Dendritic cell treated with granulocyte-macrophage colony-stimulating factor and Interleukin-4, amounts not matched to agents 40 ng/mL and 50 ng/mL, for 4 days (primary cell): ENCODE measurements at regions of chr12 and their contacts with region 1.

Region 1: DNA sequence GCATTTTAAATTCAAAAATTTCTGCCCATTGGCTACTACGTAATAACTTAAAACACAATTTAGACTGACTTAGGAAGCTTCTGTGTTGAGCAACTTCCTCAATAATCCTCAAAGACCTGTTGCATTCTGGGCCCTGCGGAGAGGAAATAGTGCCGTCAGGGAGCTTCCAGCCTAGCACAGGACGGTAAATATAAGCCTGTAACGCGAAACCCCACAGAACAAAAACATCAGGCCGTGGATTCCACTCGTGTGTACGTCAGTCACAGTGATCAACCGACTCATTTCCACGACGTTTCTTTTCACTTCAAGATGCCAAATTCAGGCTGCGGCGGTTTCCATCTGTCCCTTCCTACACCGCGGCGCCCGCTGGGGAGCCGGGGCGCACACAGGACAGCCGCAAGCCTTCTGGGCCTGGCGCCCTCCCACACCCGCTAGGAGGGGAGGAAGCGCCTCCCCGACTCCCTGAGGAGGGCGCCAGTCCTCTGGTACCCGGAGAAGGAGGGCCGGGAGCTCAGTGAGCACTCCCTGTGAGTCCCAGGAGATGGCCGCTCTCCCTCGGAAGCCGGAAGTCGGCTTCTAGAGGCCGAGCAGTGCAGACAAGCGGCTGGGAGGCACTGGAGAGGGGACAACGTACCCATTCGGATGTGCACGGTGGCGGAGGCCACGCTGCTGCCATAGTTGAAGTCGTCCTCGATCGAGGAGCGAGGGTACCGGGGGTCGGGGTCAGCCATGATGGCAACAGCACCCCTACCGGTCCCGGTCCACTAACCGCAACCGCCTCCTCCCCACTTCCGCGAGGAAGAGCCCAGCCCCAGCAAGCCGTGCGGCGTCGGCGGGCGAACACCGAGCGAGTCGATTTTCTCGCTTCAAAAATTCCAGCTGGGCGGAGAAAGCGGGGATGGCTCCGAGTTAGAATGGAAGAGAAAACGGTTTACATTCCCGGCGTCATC is at the start of gene TMBIM4:
- H3K4me3 Mint-ChIP-seq: peak within 1 kb of the TSS; percentile 97
- H3K27ac Mint-ChIP-seq: peak within 1 kb of the TSS; percentile 100
- H3K4me1 Mint-ChIP-seq: peaks cover 56% of the 10 kb centered on the region
- H3K27me3 Mint-ChIP-seq: no peaks in the 10 kb centered on the region

Region 2: DNA sequence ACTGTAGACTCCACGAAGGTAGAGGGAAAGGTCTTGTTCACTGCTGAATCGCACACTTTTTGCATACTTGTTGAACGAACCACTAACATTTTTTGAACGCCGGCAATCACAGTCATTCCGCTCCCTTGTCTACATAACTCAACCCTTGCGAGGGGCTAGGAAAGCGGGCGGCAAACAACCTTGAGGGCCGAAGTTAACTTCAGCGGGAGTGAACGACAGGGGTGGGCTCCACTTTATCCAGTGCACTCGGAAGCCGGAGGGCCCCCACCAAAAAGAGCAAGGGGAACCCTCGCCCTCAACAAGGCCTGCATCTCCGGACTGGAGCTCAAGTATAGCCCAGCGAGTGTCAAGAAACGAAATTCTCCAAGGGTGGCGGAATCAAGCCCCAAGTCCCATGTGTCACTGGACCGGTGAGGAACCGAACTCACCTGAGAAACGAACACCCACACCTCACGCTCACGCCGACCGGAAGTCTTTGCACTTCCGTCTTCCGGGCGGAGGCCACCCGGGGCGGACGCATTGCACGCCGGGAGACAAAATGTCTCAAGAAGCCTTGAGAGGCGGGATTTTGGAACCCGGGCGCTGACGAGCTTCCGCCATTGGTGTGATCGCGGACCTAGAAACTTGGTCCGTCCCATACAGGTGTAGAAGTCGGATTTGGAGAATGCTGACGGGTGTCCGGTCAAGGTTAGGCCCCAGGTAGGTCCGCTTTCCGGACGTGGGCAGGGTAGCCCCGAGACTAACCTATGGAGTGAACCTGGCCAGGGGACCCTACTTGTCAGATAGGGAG is 39.0 kb before region 1 on chr12 and contains the start of gene LLPH:
- intact Hi-C with region 1: loop called (anchors 5 kb)
- H3K4me3 Mint-ChIP-seq: peak within 1 kb of the TSS; percentile 77
- H3K27ac Mint-ChIP-seq: peak within 1 kb of the TSS; percentile 89
- H3K4me1 Mint-ChIP-seq: peaks cover 29% of the 10 kb centered on the region
- H3K27me3 Mint-ChIP-seq: no peaks in the 10 kb centered on the region

Region 3: DNA sequence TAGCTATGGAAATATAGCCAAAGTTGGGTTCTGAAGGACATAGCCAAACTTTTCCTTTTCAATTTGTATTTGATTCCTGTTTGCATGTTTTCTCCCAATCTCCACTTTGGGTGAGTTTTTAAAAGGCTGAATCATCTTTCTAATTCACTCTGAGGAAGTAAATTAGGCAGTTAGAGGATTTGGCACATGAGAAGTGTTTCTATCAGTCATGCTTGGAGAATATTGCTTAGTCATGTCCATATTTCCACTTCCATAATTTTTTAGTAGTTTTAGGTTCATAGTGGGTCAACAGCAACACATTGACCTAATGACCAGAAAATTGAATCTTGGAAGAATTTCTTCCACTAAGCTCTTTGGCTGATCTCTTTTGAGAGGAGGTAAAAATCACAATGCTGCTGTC is 41.3 kb after region 1 on chr12:
- intact Hi-C with region 1: loop called (anchors 5 kb)
- H3K4me3 Mint-ChIP-seq: no peak overlapping the region
- H3K27ac Mint-ChIP-seq: peak overlapping the region; percentile 76
- H3K4me1 Mint-ChIP-seq: peaks cover 56% of the 10 kb centered on the region
- H3K27me3 Mint-ChIP-seq: no peaks in the 10 kb centered on the region

Region 4: DNA sequence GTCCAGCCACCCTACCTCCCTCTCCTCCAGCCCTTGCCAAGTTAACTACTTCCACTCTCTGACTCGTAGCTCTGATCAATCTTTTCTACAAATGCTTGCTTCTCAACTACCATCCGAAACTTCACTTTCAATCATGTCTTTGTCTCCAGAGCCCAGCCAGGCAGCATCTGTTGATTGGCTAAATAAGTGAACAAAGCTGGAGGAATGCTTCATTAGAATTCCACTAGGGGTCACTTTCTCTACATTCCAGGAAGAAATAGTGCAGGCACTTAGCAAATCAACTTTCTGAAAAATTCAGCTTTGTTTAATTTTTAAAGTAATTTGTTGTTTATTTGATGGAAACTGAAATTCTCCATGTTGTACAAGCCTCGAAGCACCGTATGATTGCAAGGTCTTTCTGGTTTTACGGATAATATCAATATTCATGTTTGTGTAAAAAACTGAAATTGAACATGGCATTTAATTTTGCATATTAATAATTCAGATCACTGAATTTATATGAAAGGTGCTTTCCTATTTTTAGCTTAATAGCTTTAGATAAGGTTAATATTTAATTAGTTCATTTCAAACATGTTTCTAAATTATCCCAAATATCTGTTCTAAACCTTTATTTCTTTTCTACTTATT is 100.4 kb after region 1 on chr12:
- intact Hi-C with region 1: no loop called
- H3K4me3 Mint-ChIP-seq: no peak overlapping the region
- H3K27ac Mint-ChIP-seq: no peak overlapping the region
- H3K4me1 Mint-ChIP-seq: no peaks in the 10 kb centered on the region
- H3K27me3 Mint-ChIP-seq: no peaks in the 10 kb centered on the region

Region 5: GRCh38 chr12:66301944-66302826 is 132.7 kb after region 1 on chr12 and contains the start of gene HELB:
- intact Hi-C with region 1: loop called (anchors 1 kb)
- H3K4me3 Mint-ChIP-seq: peak within 1 kb of the TSS; percentile 97
- H3K27ac Mint-ChIP-seq: peak within 1 kb of the TSS; percentile 93
- H3K4me1 Mint-ChIP-seq: peaks cover 29% of the 10 kb centered on the region
- H3K27me3 Mint-ChIP-seq: no peaks in the 10 kb centered on the region